ENCODE measurements at regions of chr12 and their contacts with region 1.

Region 1: GRCh38 chr12:22624870-22625761 is at the start of gene ETNK1:
- DNase-seq: peak; percentile 97
- H3K4me3 ChIP-seq: peak within 1 kb of the TSS; percentile 79 to 94 (median 83)
- H3K27ac ChIP-seq: peak within 1 kb of the TSS; percentile 99
- H3K4me1 ChIP-seq: peaks cover 12% of the 10 kb centered on the region
- H3K27me3 ChIP-seq: no peaks in the 10 kb centered on the region
- CTCF ChIP-seq: no peak
- total RNA-seq, gene ETNK1: 37.0 to 48.3 TPM

Region 2: DNA sequence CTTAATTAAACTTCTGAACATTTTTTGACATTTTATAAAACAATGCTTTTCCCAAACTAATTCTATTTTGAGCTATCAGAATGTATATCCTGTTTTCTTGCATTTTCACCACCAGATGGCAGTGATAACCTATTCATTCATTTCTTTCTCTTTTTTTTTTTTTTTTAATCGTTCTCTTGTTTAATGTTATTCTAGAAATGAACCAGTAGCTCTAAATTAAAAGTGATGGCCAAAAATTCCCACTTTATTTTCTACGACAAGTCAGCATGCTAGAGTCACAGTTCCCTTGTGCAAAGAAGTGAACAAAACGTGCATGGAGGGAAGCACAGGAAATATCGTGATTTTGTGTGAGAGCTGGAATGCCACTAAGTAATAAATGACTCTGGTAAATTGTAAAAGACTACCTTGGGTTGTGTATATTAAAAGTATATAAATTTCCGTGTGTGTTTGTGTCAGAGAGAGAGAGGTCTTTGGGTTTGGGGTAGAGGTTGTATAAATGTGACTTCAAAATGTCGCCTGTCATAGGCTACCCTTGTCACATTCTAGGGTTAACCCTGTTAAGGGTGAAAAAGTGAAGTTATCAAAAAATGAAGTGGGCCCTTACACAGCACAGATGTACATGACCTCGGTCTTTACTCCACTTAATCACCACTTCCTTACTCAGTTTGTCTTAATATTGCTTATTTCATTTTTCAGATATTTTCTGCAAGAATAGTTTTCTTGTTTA is 927.0 kb before region 1 on chr12:
- CTCF ChIA-PET with region 1: interaction called, 16 read pairs
- dilution Hi-C with region 1: no loop called
- in situ Hi-C with region 1: no loop called
- intact Hi-C with region 1: no loop called
- DNase-seq: peak; percentile 6
- H3K4me3 ChIP-seq: no peak overlapping the region
- H3K27ac ChIP-seq: no peak overlapping the region
- H3K4me1 ChIP-seq: no peaks in the 10 kb centered on the region
- H3K27me3 ChIP-seq: no peaks in the 10 kb centered on the region
- CTCF ChIP-seq: peak; percentile 48 to 54

Region 3: GRCh38 chr12:22083167-22083566 is 541.9 kb before region 1 on chr12:
- CTCF ChIA-PET with region 1: no interaction called
- dilution Hi-C with region 1: no loop called
- in situ Hi-C with region 1: loop called in 1 of 2 experiments (anchors 25 kb)
- intact Hi-C with region 1: no loop called
- DNase-seq: peak; percentile 30
- H3K4me3 ChIP-seq: no peak overlapping the region
- H3K27ac ChIP-seq: no peak overlapping the region
- H3K4me1 ChIP-seq: no peaks in the 10 kb centered on the region
- H3K27me3 ChIP-seq: no peaks in the 10 kb centered on the region
- CTCF ChIP-seq: peak in 1 of 2 donors; percentile 57

Region 4: GRCh38 chr12:22529281-22530060 is 95.6 kb before region 1 on chr12:
- CTCF ChIA-PET with region 1: no interaction called
- dilution Hi-C with region 1: no loop called
- in situ Hi-C with region 1: loop called in 1 of 2 experiments (anchors 25 kb)
- intact Hi-C with region 1: loop called (anchors 2 kb)
- DNase-seq: peak; percentile 51
- H3K4me3 ChIP-seq: no peak overlapping the region
- H3K27ac ChIP-seq: no peak overlapping the region
- H3K4me1 ChIP-seq: peaks cover 8% of the 10 kb centered on the region
- H3K27me3 ChIP-seq: no peaks in the 10 kb centered on the region
- CTCF ChIP-seq: peak; percentile 62 to 64

Region 5: GRCh38 chr12:22544038-22544979 is 80.8 kb before region 1 on chr12 and contains the start of gene C2CD5:
- CTCF ChIA-PET with region 1: no interaction called
- dilution Hi-C with region 1: loop called (anchors 10 kb)
- in situ Hi-C with region 1: loop called (anchors 10 to 25 kb)
- intact Hi-C with region 1: loop called (anchors 1 kb)
- DNase-seq: peak; percentile 96
- H3K4me3 ChIP-seq: peak within 1 kb of the TSS; percentile 71 to 93 (median 74)
- H3K27ac ChIP-seq: peak within 1 kb of the TSS; percentile 63
- H3K4me1 ChIP-seq: peaks cover 14% of the 10 kb centered on the region
- H3K27me3 ChIP-seq: no peaks in the 10 kb centered on the region
- CTCF ChIP-seq: peak; percentile 25 to 42
- total RNA-seq, gene C2CD5: 13.8 to 18.8 TPM

Region 6: DNA sequence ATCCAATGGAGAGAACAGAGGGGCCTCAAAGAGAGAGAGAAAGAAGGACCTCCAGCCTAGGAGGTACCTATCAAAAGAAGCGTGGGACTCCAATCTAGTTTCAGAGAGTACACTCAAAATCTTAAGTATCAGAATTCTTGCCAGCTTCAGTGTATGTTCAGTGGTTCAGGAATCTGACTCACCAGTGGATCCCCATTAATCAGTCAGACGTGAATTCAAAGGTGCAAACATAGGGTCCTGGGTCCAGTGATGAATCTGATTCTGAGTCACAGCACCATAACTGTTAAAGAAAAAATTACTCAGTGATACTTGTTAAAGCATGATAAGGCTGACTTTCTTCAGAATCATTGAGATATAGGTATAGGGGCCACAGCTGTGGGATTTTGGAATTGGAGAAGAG is 33.1 kb after region 1 on chr12:
- CTCF ChIA-PET with region 1: no interaction called
- dilution Hi-C with region 1: no loop called
- in situ Hi-C with region 1: no loop called
- intact Hi-C with region 1: loop called (anchors 2 kb)
- DNase-seq: peak; percentile 97
- H3K4me3 ChIP-seq: no peak overlapping the region
- H3K27ac ChIP-seq: peak overlapping the region; percentile 83
- H3K4me1 ChIP-seq: peaks cover 35% of the 10 kb centered on the region
- H3K27me3 ChIP-seq: no peaks in the 10 kb centered on the region
- CTCF ChIP-seq: no peak

Region 7: DNA sequence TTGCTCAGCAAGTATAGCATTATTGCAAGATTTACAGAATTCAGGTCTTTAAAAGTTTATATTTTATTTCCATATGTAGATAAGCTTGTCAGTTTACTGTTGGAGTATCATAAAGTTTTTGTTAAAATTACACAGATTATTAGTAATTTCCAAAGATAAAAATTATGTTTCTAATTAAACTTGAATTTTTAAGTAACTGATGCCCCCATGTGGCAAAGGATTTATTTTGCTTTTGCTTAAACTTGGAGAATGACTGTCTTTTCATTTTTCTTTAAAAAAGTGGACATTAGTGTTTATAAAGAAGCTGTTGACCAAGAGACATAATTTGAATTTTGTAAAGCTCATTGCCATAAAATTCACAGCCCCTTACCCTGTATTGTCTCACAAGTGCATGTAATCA is 45.6 kb after region 1 on chr12:
- CTCF ChIA-PET with region 1: no interaction called
- dilution Hi-C with region 1: loop called (anchors 5 kb)
- in situ Hi-C with region 1: no loop called
- intact Hi-C with region 1: no loop called
- DNase-seq: no peak
- H3K4me3 ChIP-seq: no peak overlapping the region
- H3K27ac ChIP-seq: no peak overlapping the region
- H3K4me1 ChIP-seq: no peaks in the 10 kb centered on the region
- H3K27me3 ChIP-seq: no peaks in the 10 kb centered on the region
- CTCF ChIP-seq: peak; percentile 24 to 25

Region 8: GRCh38 chr12:23140710-23141109 is 515.6 kb after region 1 on chr12:
- CTCF ChIA-PET with region 1: no interaction called
- dilution Hi-C with region 1: no loop called
- in situ Hi-C with region 1: no loop called
- intact Hi-C with region 1: no loop called
- DNase-seq: no peak
- H3K4me3 ChIP-seq: no peak overlapping the region
- H3K27ac ChIP-seq: no peak overlapping the region
- H3K4me1 ChIP-seq: no peaks in the 10 kb centered on the region
- H3K27me3 ChIP-seq: no peaks in the 10 kb centered on the region
- CTCF ChIP-seq: no peak

Measured in mammary epithelial cell (primary cell).